Activated naive CD4-positive, alpha-beta T cell treated with anti-CD3 and anti-CD28 coated beads for 36 hours (primary cell): ENCODE measurements at regions of chr6 and their contacts with region 1.

Region 1: GRCh38 chr6:27388293-27389197 is at the start of gene ZNF391:
- DNase-seq: peak; percentile 74
- H3K4me3 Mint-ChIP-seq: peak within 1 kb of the TSS; percentile 92
- H3K27ac Mint-ChIP-seq: peak within 1 kb of the TSS; percentile 91
- H3K4me1 Mint-ChIP-seq: peaks cover 8% of the 10 kb centered on the region
- H3K27me3 Mint-ChIP-seq: no peaks in the 10 kb centered on the region
- total RNA-seq, gene ZNF391: 3.1 to 3.3 TPM

Region 2: GRCh38 chr6:27260369-27260768 is 128.2 kb before region 1 on chr6:
- CTCF ChIA-PET with region 1: no interaction called
- intact Hi-C with region 1: no loop called
- DNase-seq: no peak
- H3K4me3 Mint-ChIP-seq: no peak overlapping the region
- H3K27ac Mint-ChIP-seq: no peak overlapping the region
- H3K4me1 Mint-ChIP-seq: peaks cover 8% of the 10 kb centered on the region
- H3K27me3 Mint-ChIP-seq: peaks cover 71% of the 10 kb centered on the region

Region 3: GRCh38 chr6:27359231-27359630 is 29.3 kb before region 1 on chr6:
- CTCF ChIA-PET with region 1: no interaction called
- intact Hi-C with region 1: no loop called
- DNase-seq: no peak
- H3K4me3 Mint-ChIP-seq: no peak overlapping the region
- H3K27ac Mint-ChIP-seq: no peak overlapping the region
- H3K4me1 Mint-ChIP-seq: no peaks in the 10 kb centered on the region
- H3K27me3 Mint-ChIP-seq: no peaks in the 10 kb centered on the region

Region 4: DNA sequence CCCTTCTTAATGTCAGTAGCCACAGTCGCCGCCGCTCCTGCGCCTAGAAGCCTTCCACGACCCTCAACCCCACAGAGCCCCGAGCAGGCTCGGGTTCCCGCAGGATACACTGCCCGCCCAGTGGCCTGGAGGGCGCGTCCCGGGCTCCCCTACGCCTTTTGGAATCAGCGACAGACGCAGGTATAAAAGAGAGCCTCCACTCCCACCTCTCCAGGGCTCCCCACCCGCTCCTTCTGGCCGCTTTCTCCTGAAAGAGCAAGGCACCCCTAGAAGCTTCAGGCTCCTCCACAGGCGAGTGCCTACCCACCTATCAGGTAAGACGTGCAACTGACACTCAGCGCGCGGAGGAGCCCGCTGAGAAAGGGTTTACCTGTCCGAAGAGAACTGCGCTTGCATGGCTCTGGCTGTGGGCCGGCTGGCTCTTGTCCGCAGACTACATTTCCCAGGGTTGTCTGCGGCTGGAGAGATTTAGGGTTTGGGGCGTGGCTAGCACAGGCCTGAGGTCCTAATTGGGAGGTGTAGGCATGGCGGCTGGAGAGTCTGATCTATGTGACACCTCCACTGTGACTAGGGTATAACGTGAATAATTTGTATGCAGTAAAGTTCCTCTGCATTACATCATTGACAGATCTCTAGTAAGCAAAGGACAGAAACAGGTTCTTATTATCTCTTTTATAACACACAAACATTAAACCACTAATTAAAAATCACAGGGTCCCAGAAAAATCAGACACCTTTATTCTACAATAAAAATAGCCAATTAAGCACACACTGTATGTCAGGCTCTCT is 13.5 kb before region 1 on chr6:
- CTCF ChIA-PET with region 1: interaction called, 8 read pairs
- intact Hi-C with region 1: loop called (anchors 1 kb)
- DNase-seq: peak; percentile 89
- H3K4me3 Mint-ChIP-seq: peak overlapping the region; percentile 82
- H3K27ac Mint-ChIP-seq: peak overlapping the region; percentile 67
- H3K4me1 Mint-ChIP-seq: peaks cover 18% of the 10 kb centered on the region
- H3K27me3 Mint-ChIP-seq: no peaks in the 10 kb centered on the region

Region 5: DNA sequence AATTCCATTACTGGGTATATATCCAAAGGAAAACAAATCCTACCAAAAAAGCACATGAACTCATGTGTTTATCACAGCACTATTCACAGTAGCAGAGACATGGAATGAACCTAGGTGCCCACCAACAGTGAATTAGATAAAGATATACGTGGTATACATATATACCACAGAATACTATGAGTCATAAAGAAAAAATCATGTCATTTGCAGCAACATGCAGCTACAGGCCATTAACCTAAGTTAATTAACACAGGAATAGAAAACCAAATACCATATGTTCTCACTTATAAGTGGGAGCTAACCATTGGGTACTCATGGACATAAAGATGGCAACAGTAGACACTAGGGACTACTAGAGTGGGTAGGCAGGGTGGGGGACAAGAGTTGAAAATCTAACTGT is 519.5 kb after region 1 on chr6:
- CTCF ChIA-PET with region 1: no interaction called
- intact Hi-C with region 1: no loop called
- DNase-seq: no peak
- H3K4me3 Mint-ChIP-seq: no peak overlapping the region
- H3K27ac Mint-ChIP-seq: no peak overlapping the region
- H3K4me1 Mint-ChIP-seq: no peaks in the 10 kb centered on the region
- H3K27me3 Mint-ChIP-seq: peaks cover 2% of the 10 kb centered on the region